ENCODE measurements at regions of chr9 and their contacts with region 1.

Region 1: DNA sequence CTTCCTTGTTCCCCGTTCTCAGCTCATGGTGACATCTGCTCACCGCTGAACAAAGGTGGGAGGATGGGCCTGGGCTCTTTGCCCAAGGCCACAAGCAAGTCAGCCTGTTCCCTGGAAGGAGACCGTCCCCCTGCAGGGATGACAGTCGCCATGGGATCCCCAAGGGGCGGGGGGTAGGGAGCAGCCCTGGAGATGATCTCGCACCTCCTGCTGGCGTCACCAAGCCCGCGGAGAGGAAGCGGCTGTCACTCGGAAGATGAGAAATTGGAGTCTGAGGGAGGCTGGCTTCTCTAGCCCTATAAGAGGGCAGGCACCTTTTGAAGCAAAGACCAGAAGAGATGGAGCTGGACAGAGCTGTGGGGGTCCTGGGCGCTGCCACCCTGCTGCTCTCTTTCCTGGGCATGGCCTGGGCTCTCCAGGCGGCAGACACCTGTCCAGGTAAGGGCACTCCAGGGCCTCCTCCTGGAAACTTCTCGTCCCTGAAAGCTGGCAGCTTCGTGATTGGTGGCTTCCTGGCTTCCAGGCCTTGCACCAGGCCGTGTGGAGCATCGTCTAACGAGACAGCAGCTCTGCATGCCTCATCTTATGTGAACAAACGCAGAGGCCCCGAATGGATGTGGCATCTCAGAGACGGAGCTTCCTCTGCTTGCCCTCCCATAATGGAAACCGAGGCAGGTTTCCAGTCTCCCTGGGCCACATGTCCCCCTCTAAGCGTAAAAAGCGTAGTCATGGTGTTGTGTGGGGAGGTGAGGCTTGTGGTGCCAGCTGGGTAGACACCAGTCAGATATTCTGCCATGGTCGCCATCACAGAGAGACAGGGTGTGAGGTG is at the start of gene FCN2:
- DNase-seq: no peak
- total RNA-seq, gene FCN2: not detected

Region 2: DNA sequence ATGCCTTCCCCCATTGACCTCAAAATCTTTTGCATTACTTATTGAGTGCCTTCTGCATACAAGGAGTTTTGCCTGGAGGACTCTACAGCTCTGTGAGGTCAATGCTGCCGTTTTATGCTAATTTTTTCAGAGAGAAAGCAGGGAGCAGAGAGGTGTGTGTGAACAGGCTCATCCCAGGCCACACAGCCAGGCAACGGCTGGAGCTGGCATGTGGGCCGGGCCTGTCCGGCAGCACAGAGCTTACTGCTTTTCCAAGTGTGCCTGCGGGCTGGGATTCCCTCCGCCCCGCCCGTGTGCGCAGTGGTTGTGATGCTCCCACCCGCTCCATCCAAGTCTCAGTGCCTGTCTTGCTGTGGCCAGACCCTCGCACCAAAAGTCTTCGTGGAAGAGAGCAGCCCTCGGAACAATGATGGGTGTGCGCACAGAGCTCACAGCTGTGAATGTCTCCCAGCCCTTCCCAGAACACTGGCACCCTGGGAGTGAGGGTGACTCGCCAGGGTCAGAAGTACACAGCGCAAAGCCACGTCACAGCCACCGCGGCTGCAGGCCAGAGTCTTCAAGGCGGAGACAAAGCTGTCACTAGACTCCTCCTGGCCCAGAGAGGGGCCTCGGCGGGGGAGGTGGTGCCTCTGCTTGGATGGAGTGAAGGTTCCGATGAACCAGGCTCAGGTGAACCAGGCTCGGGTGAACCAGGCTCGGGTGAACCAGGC is 156.3 kb before region 1 on chr9:
- intact Hi-C with region 1: no loop called
- DNase-seq: peak; percentile 88

Region 3: DNA sequence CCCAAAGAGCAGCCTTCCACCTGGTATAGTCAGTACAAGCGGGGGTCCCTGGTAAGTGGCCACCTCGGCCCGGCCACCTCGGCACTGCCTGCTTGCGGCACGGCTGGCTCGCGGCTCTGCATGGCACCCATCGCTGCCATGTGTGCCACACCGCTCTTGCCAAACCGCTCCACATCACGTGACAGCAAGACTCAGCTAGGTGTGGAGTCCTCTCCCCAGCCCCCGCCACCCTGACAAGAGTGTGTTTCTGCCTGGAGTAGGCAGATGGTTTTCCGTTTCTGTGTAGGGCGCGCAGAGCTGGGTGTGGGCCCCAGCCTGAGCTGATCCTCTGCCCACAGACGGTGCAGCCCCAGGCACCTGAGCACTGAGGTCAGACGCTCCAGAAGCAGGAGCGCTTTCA is 50.6 kb before region 1 on chr9:
- intact Hi-C with region 1: loop called in 1 of 2 experiments (anchors 1 kb)
- DNase-seq: no peak

Region 4: DNA sequence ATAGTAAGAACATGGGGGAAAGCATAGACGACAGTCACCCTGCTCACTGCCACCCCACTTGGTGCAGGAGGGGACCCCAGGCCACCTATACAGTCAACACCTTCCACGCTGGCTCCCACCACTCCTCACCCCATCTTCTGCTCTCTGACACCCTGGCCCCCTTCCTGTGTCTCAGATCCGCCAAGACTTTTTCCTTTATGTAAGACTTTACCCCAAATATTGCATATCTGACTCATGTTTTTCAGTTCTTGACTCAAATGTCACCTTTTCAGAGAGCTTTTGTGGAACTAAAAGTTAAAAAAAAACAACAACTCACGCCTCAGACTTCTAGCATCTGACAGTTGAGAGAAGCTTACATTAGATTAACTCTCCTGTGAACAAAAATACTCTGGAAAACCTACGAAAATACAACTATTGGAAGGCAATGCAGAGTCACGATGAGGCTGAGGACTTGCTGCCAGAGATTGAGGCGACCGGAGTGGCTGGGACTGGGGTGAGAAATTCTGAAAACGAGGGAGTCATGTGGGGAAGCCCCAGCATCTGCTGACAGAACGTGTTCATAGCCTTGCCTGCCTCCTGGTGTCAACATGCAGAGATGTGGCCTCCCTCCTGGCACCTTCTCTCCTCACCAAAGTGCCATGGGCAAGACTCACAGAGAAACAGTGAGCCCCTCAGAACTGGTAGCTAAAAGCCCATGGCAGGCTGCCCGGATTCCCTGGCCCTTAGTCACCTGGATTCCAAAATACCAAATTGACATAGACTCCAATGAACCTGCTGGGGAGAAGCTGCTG is 22.5 kb before region 1 on chr9:
- intact Hi-C with region 1: no loop called
- DNase-seq: peak; percentile 79